MCF 10A (cell line): ENCODE measurements at regions of chr1 and their contacts with region 1.

Region 1: DNA sequence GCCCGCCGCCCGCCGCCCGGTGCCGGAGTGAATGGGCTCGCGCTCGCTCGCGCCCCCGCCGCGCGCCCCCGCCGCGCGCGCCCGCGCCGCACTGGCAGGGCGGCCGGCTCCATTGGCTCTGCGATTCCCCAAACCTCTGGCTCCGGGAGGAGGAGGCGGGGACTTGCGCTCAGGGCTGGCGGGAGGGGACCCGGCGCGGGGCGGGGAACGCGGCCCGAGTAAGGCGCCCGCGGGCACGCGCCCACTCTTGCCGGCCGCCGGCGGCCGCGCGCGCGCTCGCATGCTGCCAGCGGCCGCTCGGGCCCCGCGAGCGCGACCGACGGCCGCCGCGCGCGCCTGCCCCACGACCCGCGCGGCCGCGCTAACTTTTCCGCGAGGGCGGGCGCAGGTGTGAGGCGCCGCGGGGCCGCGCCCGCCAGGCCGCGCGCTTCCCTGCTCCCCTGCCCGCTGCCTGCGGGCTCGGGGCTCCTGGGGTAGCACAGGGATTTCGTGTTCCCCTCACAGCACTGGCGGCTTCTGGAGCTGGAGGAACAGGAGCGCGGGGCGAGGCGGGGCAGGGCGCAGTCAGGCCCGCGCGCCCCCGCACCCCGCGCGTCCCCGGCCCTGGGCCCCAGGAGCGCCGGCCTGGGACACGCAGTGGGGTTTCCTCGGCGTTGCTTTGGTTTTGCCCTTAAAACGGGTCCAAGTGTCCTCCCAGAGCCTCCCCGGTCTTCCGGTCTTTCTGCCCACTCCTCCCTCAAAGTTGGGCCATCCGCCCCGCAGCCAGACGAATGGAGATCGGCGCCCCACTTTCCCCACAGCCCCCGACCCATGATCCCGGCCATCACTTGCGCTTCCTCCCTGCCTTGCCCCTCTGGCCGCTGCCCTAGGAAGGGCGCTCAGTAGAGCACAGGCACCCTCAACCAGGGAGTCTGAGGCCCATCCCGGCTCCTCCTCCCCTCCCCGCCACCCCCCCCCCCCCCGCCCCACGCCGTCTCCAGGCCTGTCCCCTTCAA is 101.5 kb downstream of the CASZ1 start:
- DNase-seq: peak; percentile 83
- H3K4me3 Mint-ChIP-seq: peak overlapping the region; percentile 71
- H3K27ac Mint-ChIP-seq: no peak overlapping the region
- H3K4me1 Mint-ChIP-seq: peaks cover 24% of the 10 kb centered on the region
- H3K27me3 Mint-ChIP-seq: no peaks in the 10 kb centered on the region
- CTCF ChIP-seq: no peak

Region 2: DNA sequence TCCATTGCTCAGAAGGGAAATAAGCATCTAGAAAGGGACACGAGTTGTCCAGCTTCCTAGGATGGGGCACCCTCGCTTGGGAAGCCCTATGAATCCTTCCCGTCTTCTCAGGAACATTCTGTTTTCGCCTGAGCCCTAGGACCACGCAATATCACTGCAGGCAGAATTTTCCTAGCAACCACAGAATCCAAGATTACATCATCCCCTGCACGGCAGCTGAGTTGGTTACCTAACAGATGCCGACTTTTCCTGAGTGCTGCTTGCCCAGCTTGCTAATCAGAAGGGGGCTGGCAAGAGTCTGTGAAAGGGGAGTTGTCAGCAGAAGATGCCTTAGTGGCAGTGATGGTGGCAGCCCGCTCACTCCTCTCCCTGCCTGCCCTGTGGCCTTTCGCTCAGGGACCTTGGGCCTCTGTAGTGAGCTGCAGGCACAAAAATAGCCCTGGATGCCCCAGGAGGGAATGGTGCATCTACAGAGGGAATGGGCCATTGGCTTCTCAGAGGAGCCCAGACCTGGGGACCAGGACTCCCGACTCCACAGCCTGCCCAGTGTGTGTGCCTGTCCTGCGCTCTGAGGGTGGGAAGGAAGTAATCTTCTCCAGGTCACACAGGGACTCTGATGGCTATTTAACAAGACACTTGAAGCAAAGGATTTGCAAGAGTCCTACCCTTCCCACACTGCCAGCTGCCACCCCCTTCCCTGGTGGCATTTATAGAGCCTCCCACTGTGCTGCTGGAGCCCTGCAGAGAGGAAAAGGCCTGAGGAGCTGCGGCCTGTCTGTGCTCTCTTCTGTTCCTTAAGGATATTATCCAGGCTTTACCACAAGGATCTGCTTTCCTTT is 842.3 kb before region 1 on chr1:
- CTCF ChIA-PET with region 1: no interaction called
- POLR2A ChIA-PET with region 1: no interaction called
- intact Hi-C with region 1: no loop called
- DNase-seq: peak; percentile 85
- H3K4me3 Mint-ChIP-seq: no peak overlapping the region
- H3K27ac Mint-ChIP-seq: peak overlapping the region; percentile 70
- H3K4me1 Mint-ChIP-seq: peaks cover 4% of the 10 kb centered on the region
- H3K27me3 Mint-ChIP-seq: no peaks in the 10 kb centered on the region
- CTCF ChIP-seq: no peak

Region 3: DNA sequence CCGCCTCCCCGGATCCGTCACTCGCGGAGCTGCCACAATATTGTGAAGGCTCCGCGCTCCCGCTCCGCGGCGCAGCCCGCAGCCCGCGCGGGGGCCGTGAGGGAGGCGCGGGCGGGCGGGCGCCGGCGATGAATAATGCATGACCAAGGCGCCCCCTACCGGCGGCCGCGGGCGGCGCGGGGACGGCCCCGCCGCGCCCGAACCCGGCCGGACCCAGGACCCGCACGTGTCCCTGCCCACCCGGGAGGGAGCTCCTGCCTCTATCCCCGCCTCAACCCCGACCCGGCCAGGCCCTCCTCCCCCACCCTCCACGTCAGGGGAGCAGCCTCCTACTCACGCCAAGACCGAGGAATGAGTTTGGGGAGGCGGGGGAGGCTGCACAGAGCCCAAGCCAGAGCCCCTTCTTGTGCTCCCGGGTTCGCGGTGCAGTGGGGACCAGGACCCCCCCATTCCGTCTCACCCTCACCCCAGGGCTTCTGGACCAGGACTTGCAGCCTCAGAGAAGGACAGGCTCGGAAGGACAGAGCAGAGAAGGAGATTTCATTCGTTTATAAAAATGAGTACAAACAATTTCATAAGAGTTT is 172.3 kb after region 1 on chr1:
- CTCF ChIA-PET with region 1: interaction called, 5 read pairs
- POLR2A ChIA-PET with region 1: no interaction called
- intact Hi-C with region 1: loop called (anchors 1 kb)
- DNase-seq: peak; percentile 36
- H3K4me3 Mint-ChIP-seq: peak overlapping the region; percentile 55
- H3K27ac Mint-ChIP-seq: no peak overlapping the region
- H3K4me1 Mint-ChIP-seq: peaks cover 6% of the 10 kb centered on the region
- H3K27me3 Mint-ChIP-seq: no peaks in the 10 kb centered on the region
- CTCF ChIP-seq: peak; percentile 85

Region 4: GRCh38 chr1:10941891-10942541 is 247.1 kb after region 1 on chr1:
- CTCF ChIA-PET with region 1: no interaction called
- POLR2A ChIA-PET with region 1: no interaction called
- intact Hi-C with region 1: loop called (anchors 5 kb)
- DNase-seq: peak; percentile 56
- H3K4me3 Mint-ChIP-seq: no peak overlapping the region
- H3K27ac Mint-ChIP-seq: no peak overlapping the region
- H3K4me1 Mint-ChIP-seq: peaks cover 15% of the 10 kb centered on the region
- H3K27me3 Mint-ChIP-seq: peaks cover 11% of the 10 kb centered on the region
- CTCF ChIP-seq: peak; percentile 98